Left cardiac atrium (tissue), 4 donors: ENCODE measurements at regions of chr5 and their contacts with region 1.

Region 1: DNA sequence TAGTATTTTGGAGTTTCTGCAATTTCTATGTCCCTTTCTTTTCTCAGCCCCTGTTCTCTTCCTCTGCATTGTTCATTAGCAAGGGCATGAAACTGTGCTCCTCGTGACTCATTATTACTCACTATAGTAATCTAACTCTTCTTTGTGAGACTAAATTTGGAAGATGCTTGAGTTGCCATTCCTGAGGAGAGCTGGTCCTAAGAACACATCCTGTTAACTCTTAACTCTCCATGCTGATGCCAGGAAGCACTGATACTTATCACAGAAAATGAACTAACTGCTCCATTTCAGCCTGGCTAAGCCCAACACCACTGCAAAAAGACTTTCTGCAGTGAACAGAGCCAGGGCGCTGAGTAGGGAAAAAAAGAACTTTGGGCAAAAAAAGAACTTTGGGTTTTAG is 10.6 kb upstream of the CSNK1A1 start:
- DNase-seq: no peak
- ATAC-seq: peak; percentile 87 to 95

Region 2: GRCh38 chr5:149317281-149318048 is 244.4 kb before region 1 on chr5:
- intact Hi-C with region 1: loop called in 1 of 2 experiments (anchors 2 kb)
- DNase-seq: no peak
- ATAC-seq: no peak